ENCODE measurements at regions of chr2 and their contacts with region 1.

Region 1: GRCh38 chr2:160157861-160158829 is 41.9 kb downstream of the ITGB6 start:
- DNase-seq: no peak
- H3K4me3 ChIP-seq: no peak overlapping the region
- H3K27me3 ChIP-seq: no peaks in the 10 kb centered on the region
- CTCF ChIP-seq: no peak

Region 2: GRCh38 chr2:159840616-159841015 is 317.5 kb before region 1 on chr2:
- CTCF ChIA-PET with region 1: no interaction called
- POLR2A ChIA-PET with region 1: no interaction called
- DNase-seq: no peak
- H3K4me3 ChIP-seq: no peak overlapping the region
- H3K27me3 ChIP-seq: no peaks in the 10 kb centered on the region
- CTCF ChIP-seq: no peak

Region 3: DNA sequence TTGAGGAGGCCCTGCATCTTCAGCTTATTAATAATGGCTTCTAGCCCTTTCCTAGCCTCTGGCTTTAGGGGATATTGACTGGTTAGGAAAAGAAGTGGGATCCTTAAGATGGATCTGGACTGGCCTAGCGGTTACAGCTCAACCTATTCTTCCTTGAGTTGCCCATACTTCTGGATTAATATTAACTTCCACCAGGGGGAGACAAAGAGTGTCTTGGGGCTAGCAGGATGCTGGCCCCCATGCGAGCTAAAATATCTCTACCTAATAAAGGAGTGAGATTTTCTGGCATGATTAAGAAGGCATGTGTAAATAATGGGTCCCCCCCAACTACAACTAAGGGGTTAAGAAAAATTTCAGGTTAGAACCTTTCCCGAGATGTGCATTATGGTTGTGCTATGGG is 72.5 kb before region 1 on chr2:
- CTCF ChIA-PET with region 1: no interaction called
- POLR2A ChIA-PET with region 1: no interaction called
- DNase-seq: no peak
- H3K4me3 ChIP-seq: no peak overlapping the region
- H3K27me3 ChIP-seq: no peaks in the 10 kb centered on the region
- CTCF ChIP-seq: 0 out of 2 replicates have a peak, but pooled peaks have one; percentile 19

Region 4: GRCh38 chr2:160141419-160141818 is 16.7 kb before region 1 on chr2:
- CTCF ChIA-PET with region 1: interaction called, 3 read pairs
- POLR2A ChIA-PET with region 1: interaction called, 11 read pairs
- DNase-seq: no peak
- H3K4me3 ChIP-seq: no peak overlapping the region
- H3K27me3 ChIP-seq: no peaks in the 10 kb centered on the region; the same call in 1 of the 2 replicates
- CTCF ChIP-seq: no peak

Region 5: DNA sequence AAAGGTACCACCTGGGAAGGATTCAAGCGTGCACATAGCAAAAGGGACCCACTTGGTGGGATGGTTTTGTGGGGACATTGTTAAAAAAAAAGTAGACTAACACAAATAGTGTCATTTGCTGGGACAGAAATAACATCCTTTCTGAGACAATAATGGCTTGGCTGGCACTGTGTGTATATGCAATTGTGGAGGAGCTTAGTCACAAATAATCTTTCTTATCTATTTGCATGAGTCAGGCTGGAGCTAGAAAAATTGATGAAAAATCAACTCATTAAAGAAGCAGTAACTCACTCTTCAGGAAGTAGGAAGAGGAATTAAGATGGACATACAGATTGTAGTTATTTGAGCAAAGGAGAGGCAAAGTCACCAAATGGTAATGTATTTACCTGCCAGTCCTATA is 71.4 kb after region 1 on chr2:
- CTCF ChIA-PET with region 1: no interaction called
- POLR2A ChIA-PET with region 1: no interaction called
- DNase-seq: no peak
- H3K4me3 ChIP-seq: no peak overlapping the region
- H3K27me3 ChIP-seq: no peaks in the 10 kb centered on the region
- CTCF ChIP-seq: no peak

Region 6: DNA sequence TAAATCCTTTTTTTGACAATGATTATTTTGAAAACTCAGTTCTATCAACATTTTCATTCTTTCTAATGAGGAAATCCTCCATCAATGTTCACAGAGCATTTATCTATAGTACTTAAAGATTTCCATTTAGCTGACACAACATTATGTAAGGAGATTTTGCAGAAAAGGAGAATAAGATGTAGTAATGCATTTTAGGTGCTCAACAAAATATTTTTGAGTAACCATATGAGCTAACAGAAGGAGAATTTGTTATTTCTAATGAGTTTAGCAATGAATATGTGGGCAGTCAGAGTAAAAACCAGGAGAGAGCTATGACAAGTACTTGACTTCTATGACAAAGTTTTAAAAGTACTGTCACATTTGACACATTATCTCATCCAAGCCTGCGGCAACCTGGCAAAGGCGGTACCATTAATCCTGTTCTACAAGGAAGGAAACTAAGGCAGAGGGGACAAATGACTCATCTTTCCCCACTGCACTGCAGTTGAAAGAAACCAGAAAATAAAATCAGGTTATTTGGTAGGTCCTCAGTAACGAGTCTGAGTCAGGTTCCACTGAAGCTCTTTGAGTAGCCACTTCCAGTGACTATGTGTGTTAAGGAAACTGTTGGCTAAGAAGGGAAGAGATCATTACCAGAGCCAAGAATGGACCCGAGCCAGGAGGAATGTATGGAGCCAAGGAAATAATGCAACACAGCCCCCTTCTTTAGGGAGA is 176.0 kb after region 1 on chr2:
- CTCF ChIA-PET with region 1: no interaction called
- POLR2A ChIA-PET with region 1: no interaction called
- DNase-seq: no peak
- H3K4me3 ChIP-seq: no peak overlapping the region
- H3K27me3 ChIP-seq: no peaks in the 10 kb centered on the region
- CTCF ChIP-seq: no peak

Measured in BJ (cell line).